CD4-positive, alpha-beta T cell (primary cell): ENCODE measurements at regions of chr9 and their contacts with region 1.

Region 1: DNA sequence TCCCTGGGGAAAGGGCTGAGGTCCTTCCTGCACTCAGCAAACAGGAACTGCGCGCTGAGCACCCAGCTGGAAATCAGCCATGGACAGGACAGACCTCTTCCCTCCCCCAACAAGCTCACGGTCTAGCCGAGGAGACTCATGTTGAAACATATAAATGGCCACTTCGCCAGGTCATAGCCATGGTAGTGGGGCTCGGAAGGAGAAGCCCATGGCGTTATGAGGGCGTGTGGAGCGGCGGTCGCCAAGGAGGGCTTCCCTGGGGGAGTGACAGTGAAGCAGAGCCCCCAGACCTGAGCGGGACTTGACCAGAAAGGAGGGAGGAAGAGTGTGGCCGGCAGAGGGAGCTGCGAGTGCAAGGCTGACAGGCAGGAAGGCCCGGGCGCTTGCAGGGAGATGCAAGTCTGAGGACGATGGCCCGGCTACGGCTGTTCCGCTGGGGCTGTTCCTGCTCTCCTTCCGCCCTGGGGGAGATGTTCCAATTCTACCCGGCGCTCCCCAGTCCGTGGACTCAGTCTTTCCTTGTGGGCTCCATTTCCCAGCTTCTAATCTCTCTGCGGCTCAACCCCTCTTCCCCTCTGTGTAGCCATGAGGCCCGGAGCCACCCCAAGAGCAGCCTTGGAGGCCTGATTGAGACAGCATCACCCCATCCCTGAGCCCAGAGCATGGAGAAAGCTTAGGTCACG is 43.9 kb upstream of the PRRC2B start:
- DNase-seq: peak; percentile 82 to 92 (median 88)
- ATAC-seq: peak; percentile 99
- H3K4me3 ChIP-seq: no peak overlapping the region
- H3K4me3 Mint-ChIP-seq: no peak overlapping the region
- H3K27ac ChIP-seq: no peak overlapping the region
- H3K27ac Mint-ChIP-seq: peak overlapping the region; percentile 30
- H3K4me1 ChIP-seq: peaks cover 11% of the 10 kb centered on the region
- H3K4me1 Mint-ChIP-seq: peaks cover 9% of the 10 kb centered on the region
- H3K27me3 ChIP-seq: no peaks in the 10 kb centered on the region
- H3K27me3 Mint-ChIP-seq: no peaks in the 10 kb centered on the region
- CTCF ChIP-seq: peak; percentile 92

Region 2: DNA sequence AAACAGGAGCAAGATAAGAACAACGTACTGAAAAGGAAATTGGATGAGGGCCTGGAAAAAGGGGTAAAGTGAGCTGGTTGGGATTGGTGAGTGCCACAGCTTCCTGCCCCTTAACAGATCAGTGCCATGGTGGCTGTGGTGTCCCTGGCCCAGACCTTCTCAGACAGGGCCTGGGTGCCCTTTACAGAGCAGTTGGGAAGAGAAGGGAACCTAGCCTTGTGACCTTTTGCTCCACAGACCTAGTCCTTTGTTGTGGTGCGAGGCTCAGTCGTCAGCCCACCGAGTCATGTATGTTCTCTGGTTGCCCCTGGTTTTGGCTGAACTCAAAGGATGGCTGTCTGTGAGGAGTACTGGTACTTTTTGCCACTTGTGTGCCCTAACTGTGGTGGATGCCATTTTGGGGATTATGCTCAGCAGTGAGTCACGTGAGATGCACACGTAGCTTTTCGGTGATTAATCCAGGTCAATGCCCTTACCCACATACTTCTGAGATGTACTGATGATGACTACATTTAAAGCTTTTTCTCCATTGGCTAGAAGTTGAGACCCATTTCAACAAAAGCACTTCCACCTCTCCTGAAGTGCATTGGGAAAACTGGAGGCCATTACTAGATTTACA is 608.1 kb before region 1 on chr9:
- CTCF ChIA-PET with region 1: no interaction called
- POLR2A ChIA-PET with region 1: no interaction called
- intact Hi-C with region 1: no loop called
- DNase-seq: no peak
- ATAC-seq: no peak
- H3K4me3 ChIP-seq: no peak overlapping the region
- H3K4me3 Mint-ChIP-seq: no peak overlapping the region
- H3K27ac ChIP-seq: no peak overlapping the region
- H3K27ac Mint-ChIP-seq: no peak overlapping the region
- H3K4me1 ChIP-seq: no peaks in the 10 kb centered on the region
- H3K4me1 Mint-ChIP-seq: peaks cover 19% of the 10 kb centered on the region
- H3K27me3 ChIP-seq: no peaks in the 10 kb centered on the region
- H3K27me3 Mint-ChIP-seq: no peaks in the 10 kb centered on the region
- CTCF ChIP-seq: no peak

Region 3: DNA sequence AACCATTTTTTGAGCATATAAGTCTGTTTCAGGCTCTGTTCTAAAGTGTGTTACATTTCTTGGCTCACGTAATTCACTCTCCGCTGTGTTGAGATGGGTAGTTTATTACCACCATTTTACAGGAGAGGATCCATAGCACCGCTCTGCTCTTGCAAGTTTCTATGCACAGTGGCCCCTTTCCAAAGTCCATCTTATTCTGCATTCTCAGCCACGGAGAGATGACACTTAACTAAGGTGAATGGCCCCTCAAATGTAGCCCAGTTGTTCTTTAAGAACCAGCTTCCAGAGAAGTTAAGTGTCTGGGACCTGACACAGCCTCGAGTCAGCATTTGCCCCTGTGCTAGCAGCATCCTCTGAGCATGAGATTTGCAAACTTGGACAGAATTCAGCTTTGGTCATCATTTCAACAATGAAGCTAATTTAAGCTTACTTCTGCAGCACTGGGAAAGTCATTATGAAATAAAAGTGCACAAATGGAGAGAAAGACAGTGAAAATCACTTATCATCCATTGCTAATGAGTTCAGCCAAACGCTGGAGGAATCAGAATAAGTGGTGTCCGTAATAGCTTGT is 135.7 kb before region 1 on chr9:
- CTCF ChIA-PET with region 1: no interaction called
- POLR2A ChIA-PET with region 1: no interaction called
- intact Hi-C with region 1: no loop called
- DNase-seq: no peak
- ATAC-seq: no peak
- H3K4me3 ChIP-seq: no peak overlapping the region
- H3K4me3 Mint-ChIP-seq: no peak overlapping the region
- H3K27ac ChIP-seq: no peak overlapping the region
- H3K27ac Mint-ChIP-seq: no peak overlapping the region
- H3K4me1 ChIP-seq: no peaks in the 10 kb centered on the region
- H3K4me1 Mint-ChIP-seq: no peaks in the 10 kb centered on the region
- H3K27me3 ChIP-seq: no peaks in the 10 kb centered on the region
- H3K27me3 Mint-ChIP-seq: no peaks in the 10 kb centered on the region
- CTCF ChIP-seq: no peak

Region 4: GRCh38 chr9:131361202-131361833 is 11.3 kb after region 1 on chr9:
- CTCF ChIA-PET with region 1: interaction called, 12 read pairs
- POLR2A ChIA-PET with region 1: no interaction called
- intact Hi-C with region 1: no loop called
- DNase-seq: peak in 6 of 14 experiments; percentile 13 to 61 (median 20)
- ATAC-seq: peak; percentile 41
- H3K4me3 ChIP-seq: no peak overlapping the region
- H3K4me3 Mint-ChIP-seq: peak overlapping the region; percentile 79
- H3K27ac ChIP-seq: no peak overlapping the region
- H3K27ac Mint-ChIP-seq: peak overlapping the region; percentile 81
- H3K4me1 ChIP-seq: peaks cover 28% of the 10 kb centered on the region
- H3K4me1 Mint-ChIP-seq: peaks cover 30% of the 10 kb centered on the region
- H3K27me3 ChIP-seq: no peaks in the 10 kb centered on the region
- H3K27me3 Mint-ChIP-seq: no peaks in the 10 kb centered on the region
- CTCF ChIP-seq: no peak

Region 5: GRCh38 chr9:131366761-131367401 is 16.9 kb after region 1 on chr9:
- CTCF ChIA-PET with region 1: no interaction called
- POLR2A ChIA-PET with region 1: no interaction called
- intact Hi-C with region 1: loop called in 1 of 2 experiments (anchors 2 kb)
- DNase-seq: peak in 3 of 14 experiments; percentile 7 to 34 (median 25)
- ATAC-seq: no peak
- H3K4me3 ChIP-seq: no peak overlapping the region
- H3K4me3 Mint-ChIP-seq: no peak overlapping the region
- H3K27ac ChIP-seq: no peak overlapping the region
- H3K27ac Mint-ChIP-seq: no peak overlapping the region
- H3K4me1 ChIP-seq: peaks cover 2% of the 10 kb centered on the region
- H3K4me1 Mint-ChIP-seq: peaks cover 6% of the 10 kb centered on the region
- H3K27me3 ChIP-seq: no peaks in the 10 kb centered on the region
- H3K27me3 Mint-ChIP-seq: no peaks in the 10 kb centered on the region
- CTCF ChIP-seq: peak; percentile 40

Region 6: GRCh38 chr9:131407717-131408195 is 57.7 kb after region 1 on chr9:
- CTCF ChIA-PET with region 1: interaction called, 38 read pairs
- POLR2A ChIA-PET with region 1: interaction called, 12 read pairs
- intact Hi-C with region 1: loop called (anchors 1 kb)
- DNase-seq: peak in 12 of 14 experiments; percentile 26 to 81 (median 52)
- ATAC-seq: peak; percentile 78
- H3K4me3 ChIP-seq: peak overlapping the region; percentile 39
- H3K4me3 Mint-ChIP-seq: peak overlapping the region; percentile 89
- H3K27ac ChIP-seq: peak overlapping the region; percentile 18 to 39
- H3K27ac Mint-ChIP-seq: peak overlapping the region; percentile 86
- H3K4me1 ChIP-seq: peaks cover 93% of the 10 kb centered on the region
- H3K4me1 Mint-ChIP-seq: peaks cover 93% of the 10 kb centered on the region
- H3K27me3 ChIP-seq: no peaks in the 10 kb centered on the region
- H3K27me3 Mint-ChIP-seq: no peaks in the 10 kb centered on the region
- CTCF ChIP-seq: peak; percentile 71

Region 7: GRCh38 chr9:131478421-131478868 is 128.4 kb after region 1 on chr9:
- CTCF ChIA-PET with region 1: interaction called, 5 read pairs
- POLR2A ChIA-PET with region 1: no interaction called
- intact Hi-C with region 1: loop called (anchors 1 kb)
- DNase-seq: peak; percentile 40 to 76 (median 57)
- ATAC-seq: peak; percentile 65
- H3K4me3 ChIP-seq: no peak overlapping the region
- H3K4me3 Mint-ChIP-seq: no peak overlapping the region
- H3K27ac ChIP-seq: no peak overlapping the region
- H3K27ac Mint-ChIP-seq: peak overlapping the region; percentile 8
- H3K4me1 ChIP-seq: no peaks in the 10 kb centered on the region
- H3K4me1 Mint-ChIP-seq: peaks cover 6% of the 10 kb centered on the region
- H3K27me3 ChIP-seq: no peaks in the 10 kb centered on the region
- H3K27me3 Mint-ChIP-seq: no peaks in the 10 kb centered on the region
- CTCF ChIP-seq: peak; percentile 65

Region 8: GRCh38 chr9:131559421-131560000 is 209.5 kb after region 1 on chr9:
- CTCF ChIA-PET with region 1: no interaction called
- POLR2A ChIA-PET with region 1: no interaction called
- intact Hi-C with region 1: loop called in 1 of 2 experiments (anchors 1 kb)
- DNase-seq: peak in 2 of 14 experiments; percentile 26 to 29
- ATAC-seq: no peak
- H3K4me3 ChIP-seq: no peak overlapping the region
- H3K4me3 Mint-ChIP-seq: no peak overlapping the region
- H3K27ac ChIP-seq: no peak overlapping the region
- H3K27ac Mint-ChIP-seq: no peak overlapping the region
- H3K4me1 ChIP-seq: no peaks in the 10 kb centered on the region
- H3K4me1 Mint-ChIP-seq: no peaks in the 10 kb centered on the region
- H3K27me3 ChIP-seq: peaks cover 11% of the 10 kb centered on the region in 2 experiments
- H3K27me3 Mint-ChIP-seq: peaks cover 21% of the 10 kb centered on the region
- CTCF ChIP-seq: peak; percentile 28

Region 9: GRCh38 chr9:131747356-131747755 is 397.3 kb after region 1 on chr9:
- CTCF ChIA-PET with region 1: no interaction called
- POLR2A ChIA-PET with region 1: no interaction called
- intact Hi-C with region 1: loop called in 1 of 2 experiments (anchors 1 kb)
- DNase-seq: peak in 5 of 14 experiments; percentile 13 to 78 (median 65)
- ATAC-seq: peak; percentile 30
- H3K4me3 ChIP-seq: no peak overlapping the region
- H3K4me3 Mint-ChIP-seq: no peak overlapping the region
- H3K27ac ChIP-seq: no peak overlapping the region
- H3K27ac Mint-ChIP-seq: peak overlapping the region; percentile 47
- H3K4me1 ChIP-seq: peaks cover 25% of the 10 kb centered on the region
- H3K4me1 Mint-ChIP-seq: peaks cover 32% of the 10 kb centered on the region
- H3K27me3 ChIP-seq: no peaks in the 10 kb centered on the region
- H3K27me3 Mint-ChIP-seq: no peaks in the 10 kb centered on the region
- CTCF ChIP-seq: peak; percentile 66